ENCODE measurements at regions of chr11 and their contacts with region 1.

Region 1: DNA sequence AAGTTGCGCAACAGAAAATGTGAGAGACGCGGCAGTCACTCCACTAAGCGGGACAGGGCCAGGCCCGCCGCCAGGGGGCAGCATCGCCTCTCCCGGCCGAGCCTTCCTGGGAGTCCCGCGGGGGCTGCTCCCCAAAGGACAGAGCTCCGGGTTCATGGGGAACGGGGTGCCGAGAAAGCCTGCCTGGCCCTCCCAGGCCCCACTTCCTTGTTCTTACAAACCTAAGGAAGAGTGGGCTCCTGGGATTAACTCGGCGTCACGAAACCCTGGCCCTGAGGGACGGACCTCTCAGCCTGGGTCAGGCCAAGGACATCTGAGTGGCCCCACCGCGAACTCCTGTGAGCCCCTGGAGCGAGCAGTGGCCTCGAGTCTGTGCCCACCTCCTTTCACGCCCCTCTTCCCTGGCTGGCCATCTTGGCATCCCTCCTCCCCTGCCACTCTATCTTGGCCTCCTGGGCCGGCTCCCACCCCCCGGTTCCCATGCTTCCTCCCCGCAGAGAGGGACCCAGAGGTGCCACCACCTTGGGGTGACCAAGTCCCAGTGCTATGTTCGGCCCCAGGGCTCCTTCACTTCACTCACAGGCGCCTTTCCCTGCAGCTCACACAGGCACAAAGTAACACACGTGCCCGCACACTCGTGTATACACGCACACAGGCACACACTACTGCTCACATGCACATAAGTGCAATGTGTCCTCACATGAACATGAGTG is 99.9 kb upstream of the FGF3 start:
- DNase-seq: peak; percentile 82
- ATAC-seq: peak; percentile 35
- H3K4me3 ChIP-seq: no peak overlapping the region
- H3K27ac ChIP-seq: no peak overlapping the region
- H3K4me1 ChIP-seq: peaks cover 35% of the 10 kb centered on the region
- H3K27me3 ChIP-seq: no peaks in the 10 kb centered on the region
- CTCF ChIP-seq: peak; percentile 99

Region 2: GRCh38 chr11:69949327-69949726 is 30.2 kb after region 1 on chr11:
- CTCF ChIA-PET with region 1: interaction called, 4 read pairs
- POLR2A ChIA-PET with region 1: interaction called, 3 read pairs
- intact Hi-C with region 1: loop called (anchors 2 kb)
- DNase-seq: peak; percentile 99
- ATAC-seq: peak; percentile 81
- H3K4me3 ChIP-seq: no peak overlapping the region
- H3K27ac ChIP-seq: peak overlapping the region; percentile 97
- H3K4me1 ChIP-seq: peaks cover 45% of the 10 kb centered on the region
- H3K27me3 ChIP-seq: no peaks in the 10 kb centered on the region
- CTCF ChIP-seq: no peak

Region 3: DNA sequence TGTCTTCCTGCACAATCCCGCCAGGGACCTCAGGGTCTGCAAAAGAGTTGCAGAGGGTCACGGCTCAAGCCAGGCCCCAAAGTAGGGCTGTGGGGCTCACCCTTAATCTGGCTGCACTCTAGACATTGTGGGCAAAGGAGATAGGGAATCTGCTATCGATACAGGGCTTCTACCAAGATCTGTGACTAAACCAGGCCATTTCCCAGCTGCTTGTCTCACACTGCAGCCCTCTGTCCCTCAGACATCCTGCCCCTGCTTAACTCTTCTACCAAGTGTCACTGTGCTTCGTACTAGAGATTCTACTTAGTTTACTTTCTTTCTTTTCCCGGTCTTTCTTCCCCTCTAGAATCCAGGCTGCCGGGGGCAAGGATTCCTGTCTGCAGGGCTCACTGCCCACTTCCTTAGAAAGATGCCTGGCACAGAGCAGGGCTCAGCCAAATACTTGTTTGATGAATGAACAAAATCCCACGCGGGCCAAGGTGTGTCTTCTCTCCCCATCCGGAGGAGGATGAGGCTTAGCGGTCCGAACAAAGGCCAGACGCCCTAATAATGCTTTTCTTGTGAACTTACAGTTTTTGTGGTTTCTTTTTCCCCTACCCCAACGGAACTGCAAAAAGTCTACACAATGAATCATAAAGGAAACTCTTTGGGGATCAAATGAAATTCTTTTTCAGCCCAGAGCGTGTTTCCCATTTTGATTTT is 97.7 kb after region 1 on chr11:
- CTCF ChIA-PET with region 1: interaction called, 3 read pairs
- POLR2A ChIA-PET with region 1: no interaction called
- intact Hi-C with region 1: loop called (anchors 10 kb)
- DNase-seq: peak; percentile 100
- ATAC-seq: peak; percentile 97
- H3K4me3 ChIP-seq: no peak overlapping the region
- H3K27ac ChIP-seq: peak overlapping the region; percentile 95
- H3K4me1 ChIP-seq: peaks cover 30% of the 10 kb centered on the region
- H3K27me3 ChIP-seq: no peaks in the 10 kb centered on the region
- CTCF ChIP-seq: no peak

Region 4: DNA sequence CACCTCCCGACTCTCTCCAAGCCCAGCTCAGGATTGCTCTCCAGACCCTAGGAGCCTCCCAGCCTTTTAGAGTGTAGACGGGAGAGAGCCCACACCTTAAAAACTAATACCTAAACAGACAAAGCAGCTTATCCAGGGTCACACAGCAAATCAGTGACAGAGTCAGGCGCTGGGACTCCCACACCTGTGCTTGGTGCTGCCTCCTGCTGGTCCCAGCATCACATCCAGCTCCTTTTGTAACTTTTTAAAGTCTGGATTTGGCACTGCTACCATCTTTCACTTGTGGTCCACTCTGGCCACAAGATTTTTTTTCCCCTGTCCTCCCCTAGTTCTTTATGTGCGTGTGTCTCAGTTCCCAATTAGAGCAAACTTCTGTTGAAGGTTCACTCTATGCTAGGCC is 163.7 kb after region 1 on chr11:
- CTCF ChIA-PET with region 1: interaction called, 4 read pairs
- POLR2A ChIA-PET with region 1: interaction called, 3 read pairs
- intact Hi-C with region 1: loop called (anchors 5 kb)
- DNase-seq: peak; percentile 45
- ATAC-seq: no peak
- H3K4me3 ChIP-seq: no peak overlapping the region
- H3K27ac ChIP-seq: no peak overlapping the region
- H3K4me1 ChIP-seq: peaks cover 47% of the 10 kb centered on the region
- H3K27me3 ChIP-seq: no peaks in the 10 kb centered on the region
- CTCF ChIP-seq: peak; percentile 75

Region 5: GRCh38 chr11:70128435-70128906 is 209.4 kb after region 1 on chr11:
- CTCF ChIA-PET with region 1: no interaction called
- POLR2A ChIA-PET with region 1: no interaction called
- intact Hi-C with region 1: loop called (anchors 2 kb)
- DNase-seq: peak; percentile 62
- ATAC-seq: peak; percentile 90
- H3K4me3 ChIP-seq: no peak overlapping the region
- H3K27ac ChIP-seq: peak overlapping the region; percentile 28
- H3K4me1 ChIP-seq: peaks cover 15% of the 10 kb centered on the region
- H3K27me3 ChIP-seq: no peaks in the 10 kb centered on the region
- CTCF ChIP-seq: peak; percentile 41

Region 6: GRCh38 chr11:70141486-70142220 is 222.6 kb after region 1 on chr11:
- CTCF ChIA-PET with region 1: no interaction called
- POLR2A ChIA-PET with region 1: no interaction called
- intact Hi-C with region 1: loop called (anchors 5 kb)
- DNase-seq: no peak
- ATAC-seq: peak; percentile 9; the same call in 1 of the 2 replicates
- H3K4me3 ChIP-seq: no peak overlapping the region; the same call in 1 of the 2 replicates
- H3K27ac ChIP-seq: peak overlapping the region; percentile 62
- H3K4me1 ChIP-seq: peaks cover 33% of the 10 kb centered on the region
- H3K27me3 ChIP-seq: no peaks in the 10 kb centered on the region
- CTCF ChIP-seq: no peak

Region 7: GRCh38 chr11:70191495-70192140 is 272.5 kb after region 1 on chr11:
- CTCF ChIA-PET with region 1: interaction called, 3 read pairs
- POLR2A ChIA-PET with region 1: no interaction called
- intact Hi-C with region 1: loop called (anchors 1 kb)
- DNase-seq: peak; percentile 84
- ATAC-seq: peak; percentile 80
- H3K4me3 ChIP-seq: no peak overlapping the region
- H3K27ac ChIP-seq: no peak overlapping the region
- H3K4me1 ChIP-seq: peaks cover 8% of the 10 kb centered on the region; the same call in 1 of the 2 replicates
- H3K27me3 ChIP-seq: no peaks in the 10 kb centered on the region
- CTCF ChIP-seq: peak; percentile 98

Measured in PC-3 (cell line).